ENCODE measurements at regions of chr10 and their contacts with region 1.

Region 1: GRCh38 chr10:19245984-19246752 is 197.6 kb downstream of the MALRD1 start:
- DNase-seq: no peak
- ATAC-seq: no peak
- H3K4me3 ChIP-seq: no peak overlapping the region
- H3K4me3 Mint-ChIP-seq: no peak overlapping the region
- H3K27ac ChIP-seq: no peak overlapping the region
- H3K27ac Mint-ChIP-seq: no peak overlapping the region
- H3K4me1 ChIP-seq: no peaks in the 10 kb centered on the region
- H3K4me1 Mint-ChIP-seq: no peaks in the 10 kb centered on the region
- H3K27me3 ChIP-seq: no peaks in the 10 kb centered on the region
- H3K27me3 Mint-ChIP-seq: no peaks in the 10 kb centered on the region

Region 2: GRCh38 chr10:18918532-18918931 is 327.6 kb before region 1 on chr10:
- CTCF ChIA-PET with region 1: no interaction called
- POLR2A ChIA-PET with region 1: no interaction called
- DNase-seq: no peak
- ATAC-seq: no peak
- H3K4me3 ChIP-seq: no peak overlapping the region
- H3K4me3 Mint-ChIP-seq: no peak overlapping the region
- H3K27ac ChIP-seq: no peak overlapping the region
- H3K27ac Mint-ChIP-seq: no peak overlapping the region
- H3K4me1 ChIP-seq: no peaks in the 10 kb centered on the region
- H3K4me1 Mint-ChIP-seq: no peaks in the 10 kb centered on the region
- H3K27me3 ChIP-seq: no peaks in the 10 kb centered on the region
- H3K27me3 Mint-ChIP-seq: no peaks in the 10 kb centered on the region

Region 3: DNA sequence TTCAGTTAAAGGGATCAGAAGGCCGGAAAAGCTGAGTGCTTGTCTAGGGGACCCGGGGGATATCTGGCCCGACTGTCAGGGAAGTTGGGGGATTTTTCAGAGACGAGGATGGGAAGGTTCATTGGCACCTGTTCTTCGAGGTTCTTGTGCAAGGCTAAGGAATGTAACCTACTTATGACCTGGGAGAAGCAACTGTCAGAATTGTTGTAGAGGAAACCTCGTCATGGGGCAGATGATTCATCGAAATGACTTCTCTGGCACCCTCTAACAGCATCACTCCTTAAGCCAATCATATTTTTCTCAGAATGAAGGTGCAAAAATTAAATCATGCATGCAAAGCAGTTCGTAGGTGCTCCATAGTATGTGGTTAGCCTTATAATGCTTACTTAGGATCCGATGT is 628.6 kb after region 1 on chr10:
- CTCF ChIA-PET with region 1: interaction called in 1 of 2 experiments, 11 read pairs
- POLR2A ChIA-PET with region 1: no interaction called
- DNase-seq: no peak
- ATAC-seq: no peak
- H3K4me3 ChIP-seq: no peak overlapping the region
- H3K4me3 Mint-ChIP-seq: no peak overlapping the region
- H3K27ac ChIP-seq: no peak overlapping the region
- H3K27ac Mint-ChIP-seq: no peak overlapping the region
- H3K4me1 ChIP-seq: no peaks in the 10 kb centered on the region
- H3K4me1 Mint-ChIP-seq: no peaks in the 10 kb centered on the region
- H3K27me3 ChIP-seq: no peaks in the 10 kb centered on the region
- H3K27me3 Mint-ChIP-seq: no peaks in the 10 kb centered on the region